Activated CD4-positive, alpha-beta memory T cell treated with anti-CD3 and anti-CD28 coated beads for 36 hours (primary cell): ENCODE measurements at regions of chrX and their contacts with region 1.

Region 1: DNA sequence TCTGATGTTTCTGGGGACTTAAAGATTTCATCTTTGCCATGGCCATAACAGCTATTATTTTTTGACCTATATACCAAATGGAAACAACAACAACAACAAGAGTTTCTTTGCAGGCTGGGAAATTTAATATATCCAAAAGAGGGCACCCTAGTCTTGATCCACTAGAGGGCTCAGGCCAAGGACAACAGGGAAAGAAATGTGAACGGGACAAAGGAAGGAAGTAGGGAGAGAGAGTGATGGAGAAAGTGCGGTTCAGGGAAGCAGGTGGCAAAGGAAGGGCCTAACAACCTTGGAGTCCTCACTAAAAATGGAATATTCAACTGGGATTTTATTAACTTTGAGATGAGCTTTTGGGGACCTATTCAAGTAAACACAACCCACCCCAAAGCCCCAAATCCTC is 67.8 kb upstream of the SCML1 start:
- DNase-seq: no peak
- H3K4me3 Mint-ChIP-seq: no peak overlapping the region
- H3K27ac Mint-ChIP-seq: peak overlapping the region; percentile 80
- H3K4me1 Mint-ChIP-seq: peaks cover 16% of the 10 kb centered on the region
- H3K27me3 Mint-ChIP-seq: no peaks in the 10 kb centered on the region

Region 2: DNA sequence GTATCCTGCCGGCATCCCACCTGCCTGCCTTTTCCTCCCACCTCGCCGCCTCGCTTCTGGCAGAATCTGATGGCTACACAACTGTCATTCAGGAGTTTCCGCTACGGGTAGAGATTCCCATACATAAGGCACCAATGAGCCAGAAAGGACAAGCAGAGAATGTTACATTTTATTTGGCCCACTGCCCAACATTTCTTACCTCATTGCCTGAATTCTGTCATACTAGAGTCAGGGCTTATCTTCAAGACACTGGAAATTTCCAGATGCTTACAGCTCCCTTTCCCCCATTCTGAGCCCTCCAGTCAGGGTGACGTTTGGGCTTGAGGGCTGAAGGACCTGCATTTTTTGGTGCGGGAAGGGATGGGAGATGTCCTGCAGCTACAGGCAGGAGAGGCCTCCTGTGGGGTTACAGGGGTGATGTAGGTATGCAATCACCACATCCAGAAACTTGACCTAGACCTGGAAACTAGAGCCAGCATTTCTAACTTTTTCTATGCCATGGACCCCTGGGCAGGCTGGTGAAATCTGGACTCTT is 181.4 kb before region 1 on chrX:
- CTCF ChIA-PET with region 1: no interaction called
- POLR2A ChIA-PET with region 1: no interaction called
- intact Hi-C with region 1: no loop called
- DNase-seq: no peak
- H3K4me3 Mint-ChIP-seq: no peak overlapping the region
- H3K27ac Mint-ChIP-seq: no peak overlapping the region
- H3K4me1 Mint-ChIP-seq: no peaks in the 10 kb centered on the region
- H3K27me3 Mint-ChIP-seq: no peaks in the 10 kb centered on the region

Region 3: DNA sequence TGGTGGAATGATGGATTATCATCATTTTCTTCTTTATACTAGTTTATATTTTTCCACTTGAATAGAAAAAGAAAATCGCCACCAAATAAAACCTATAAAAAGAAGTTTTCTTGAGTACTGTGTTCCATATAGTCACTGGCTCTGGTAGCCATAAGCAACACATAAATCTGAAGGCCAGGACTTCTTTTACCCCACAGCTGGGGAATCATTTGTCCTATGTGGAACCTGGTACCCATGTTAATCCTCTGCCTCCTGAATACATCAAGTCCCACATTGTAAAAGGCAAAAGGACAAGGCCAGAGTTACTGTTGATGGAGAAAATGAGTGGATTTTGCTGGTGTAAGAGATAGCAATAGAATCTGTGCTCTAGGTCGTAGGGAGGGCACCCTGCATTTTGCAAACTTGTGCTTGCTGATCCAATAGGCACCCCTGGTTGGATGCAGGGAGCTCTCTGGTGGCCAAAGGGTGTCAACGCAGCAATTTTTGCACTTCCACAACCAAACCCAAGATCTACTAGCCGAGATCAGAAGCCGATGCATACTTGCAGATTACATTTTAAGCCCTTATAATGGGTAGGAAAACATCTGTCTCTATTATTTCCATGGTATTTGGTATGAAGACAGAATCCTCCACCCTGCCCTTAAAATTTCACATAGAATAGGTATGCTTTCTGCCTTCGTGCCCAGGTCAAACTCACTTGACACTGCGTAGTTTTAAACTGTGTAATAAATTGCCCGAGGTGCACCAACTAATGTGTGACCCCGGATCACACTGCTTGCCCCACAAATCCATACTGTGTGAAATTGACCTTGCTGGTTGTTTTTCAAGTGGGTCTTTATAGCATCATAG is 78.3 kb before region 1 on chrX:
- CTCF ChIA-PET with region 1: no interaction called
- POLR2A ChIA-PET with region 1: no interaction called
- intact Hi-C with region 1: no loop called
- DNase-seq: peak; percentile 62
- H3K4me3 Mint-ChIP-seq: no peak overlapping the region
- H3K27ac Mint-ChIP-seq: peak overlapping the region; percentile 74
- H3K4me1 Mint-ChIP-seq: peaks cover 20% of the 10 kb centered on the region
- H3K27me3 Mint-ChIP-seq: peaks cover 4% of the 10 kb centered on the region

Region 4: GRCh38 chrX:17632942-17633341 is 36.5 kb before region 1 on chrX:
- CTCF ChIA-PET with region 1: no interaction called
- POLR2A ChIA-PET with region 1: no interaction called
- intact Hi-C with region 1: loop called (anchors 1 kb)
- DNase-seq: no peak
- H3K4me3 Mint-ChIP-seq: peak overlapping the region; percentile 59
- H3K27ac Mint-ChIP-seq: peak overlapping the region; percentile 84
- H3K4me1 Mint-ChIP-seq: peaks cover 14% of the 10 kb centered on the region
- H3K27me3 Mint-ChIP-seq: no peaks in the 10 kb centered on the region

Region 5: DNA sequence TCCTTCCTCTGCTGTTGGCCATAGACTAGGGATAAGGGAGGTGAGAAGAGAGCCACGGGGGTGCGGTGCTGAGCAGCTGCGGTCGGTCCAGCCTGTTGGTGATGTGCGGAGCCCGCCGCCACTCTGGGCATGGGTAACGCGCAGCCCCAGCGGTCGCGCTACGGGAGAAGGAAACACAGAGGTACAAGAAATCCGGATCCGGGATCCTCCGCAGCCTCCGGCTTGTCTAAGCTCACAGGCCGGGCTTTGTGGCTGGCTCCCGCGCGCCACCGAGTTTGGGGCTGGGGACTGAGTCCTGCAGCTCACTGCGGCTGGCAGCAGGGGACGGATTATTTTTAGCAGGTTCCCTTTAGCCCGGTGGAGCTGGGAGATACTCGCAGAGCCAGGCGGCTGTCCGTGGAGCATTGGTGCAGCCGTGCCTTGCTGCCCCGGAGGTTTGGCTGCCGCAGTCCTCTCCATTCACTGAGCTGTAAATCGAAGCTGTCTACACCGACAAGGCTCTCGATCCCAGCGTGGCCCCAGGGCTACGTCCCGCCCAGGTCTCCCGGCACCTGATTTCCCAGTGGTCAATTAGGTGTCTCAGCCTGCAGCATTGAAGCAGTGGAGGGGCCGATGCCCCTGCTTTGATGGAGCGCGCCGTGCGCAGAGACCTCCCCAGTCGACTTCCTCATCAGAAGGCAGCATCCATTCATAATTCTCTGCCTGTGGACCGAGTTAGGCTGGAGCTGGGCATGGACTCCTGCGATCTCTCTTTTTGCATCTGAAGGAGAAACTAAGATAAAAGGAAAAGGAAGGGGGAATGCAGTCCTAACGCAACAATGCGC is 14.0 kb before region 1 on chrX:
- CTCF ChIA-PET with region 1: interaction called, 3 read pairs
- POLR2A ChIA-PET with region 1: no interaction called
- intact Hi-C with region 1: loop called (anchors 1 kb)
- DNase-seq: peak; percentile 35
- H3K4me3 Mint-ChIP-seq: peak overlapping the region; percentile 85
- H3K27ac Mint-ChIP-seq: peak overlapping the region; percentile 81
- H3K4me1 Mint-ChIP-seq: peaks cover 29% of the 10 kb centered on the region
- H3K27me3 Mint-ChIP-seq: no peaks in the 10 kb centered on the region